ENCODE measurements at regions of chr1 and their contacts with region 1.

Region 1: DNA sequence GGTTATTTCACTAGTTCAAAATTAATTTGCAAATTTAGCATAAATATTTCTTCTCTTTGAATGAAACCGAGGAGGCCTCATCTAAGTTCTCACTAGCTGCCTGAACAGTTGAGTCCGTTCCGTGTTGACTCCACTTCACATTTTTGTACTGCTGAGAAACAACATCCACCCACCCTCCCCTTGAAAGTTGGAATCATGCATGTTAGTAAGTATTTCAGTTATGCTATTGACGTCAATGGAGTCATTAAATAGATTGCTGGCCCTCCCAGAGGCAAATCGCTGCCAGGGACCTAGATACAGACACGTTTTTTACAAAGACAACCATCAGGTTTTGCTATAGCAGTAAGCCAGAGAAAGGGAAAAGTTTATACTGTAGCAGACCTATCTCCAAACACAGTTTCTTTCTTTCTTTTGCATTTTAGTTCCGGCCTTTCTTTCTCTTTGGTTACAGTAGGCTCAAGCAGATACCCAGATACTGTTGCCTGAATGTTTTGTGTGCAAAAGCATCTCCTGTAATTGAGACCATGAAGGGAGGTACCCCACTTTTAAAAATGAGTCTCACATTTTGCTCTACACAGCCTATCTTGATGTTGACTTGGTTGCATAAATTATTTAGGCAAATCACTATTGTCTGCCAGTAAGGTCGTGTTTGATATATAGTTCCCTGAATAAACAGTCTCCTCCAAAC is 262.6 kb upstream of the SGIP1 start:
- DNase-seq: peak; percentile 96
- H3K4me3 ChIP-seq: no peak overlapping the region
- H3K27ac ChIP-seq: peak overlapping the region; percentile 44
- H3K4me1 ChIP-seq: peaks cover 18% of the 10 kb centered on the region
- H3K27me3 ChIP-seq: no peaks in the 10 kb centered on the region
- CTCF ChIP-seq: no peak

Region 2: DNA sequence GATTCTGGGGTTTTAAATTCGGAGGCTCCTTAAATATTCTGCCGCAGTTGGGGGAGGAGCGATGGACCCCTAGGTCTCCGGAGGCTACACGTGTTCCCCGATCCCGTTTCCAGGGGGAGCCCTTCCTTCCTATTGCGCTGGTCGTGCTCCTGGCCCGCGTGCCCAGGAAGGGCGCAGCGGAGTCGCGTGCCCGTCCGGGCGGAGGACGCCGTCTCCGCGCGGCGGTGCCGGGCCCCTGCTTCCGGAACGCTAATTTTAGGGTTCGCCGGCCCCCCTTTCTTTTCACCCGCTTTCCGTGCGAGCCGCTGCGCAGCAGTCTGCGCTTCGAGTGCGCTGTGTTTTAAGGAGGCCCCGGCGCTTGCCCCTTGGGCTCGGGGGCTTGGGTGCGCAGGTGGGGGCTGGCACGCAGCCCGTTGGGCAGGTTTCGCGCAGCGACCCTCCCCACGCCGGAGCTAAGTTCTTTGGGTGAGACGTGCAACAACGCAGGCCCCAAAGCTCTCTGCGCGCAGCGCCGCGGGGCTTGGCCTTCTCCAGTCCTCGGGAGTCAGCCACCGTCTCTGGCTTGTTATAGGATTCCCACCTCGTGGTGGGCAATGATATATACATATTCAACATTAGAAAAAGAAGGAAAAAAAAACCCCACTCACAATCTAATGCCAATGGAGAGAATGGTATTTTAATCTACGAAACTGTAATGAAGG is 1005.6 kb before region 1 on chr1:
- CTCF ChIA-PET with region 1: no interaction called
- dilution Hi-C with region 1: no loop called
- in situ Hi-C with region 1: no loop called
- intact Hi-C with region 1: loop called (anchors 10 kb)
- DNase-seq: peak; percentile 46
- H3K4me3 ChIP-seq: peak overlapping the region; percentile 43 to 47 (median 46)
- H3K27ac ChIP-seq: no peak overlapping the region
- H3K4me1 ChIP-seq: peaks cover 15% of the 10 kb centered on the region
- H3K27me3 ChIP-seq: no peaks in the 10 kb centered on the region
- CTCF ChIP-seq: peak; percentile 8 to 55

Region 3: GRCh38 chr1:66288048-66288447 is 16.7 kb after region 1 on chr1:
- CTCF ChIA-PET with region 1: no interaction called
- dilution Hi-C with region 1: no loop called
- in situ Hi-C with region 1: no loop called
- intact Hi-C with region 1: loop called (anchors 2 kb)
- DNase-seq: no peak
- H3K4me3 ChIP-seq: no peak overlapping the region
- H3K27ac ChIP-seq: no peak overlapping the region
- H3K4me1 ChIP-seq: peaks cover 5% of the 10 kb centered on the region
- H3K27me3 ChIP-seq: no peaks in the 10 kb centered on the region
- CTCF ChIP-seq: no peak

Region 4: GRCh38 chr1:66331657-66332547 is 60.5 kb after region 1 on chr1:
- CTCF ChIA-PET with region 1: no interaction called
- dilution Hi-C with region 1: no loop called
- in situ Hi-C with region 1: no loop called
- intact Hi-C with region 1: loop called (anchors 1 kb)
- DNase-seq: peak; percentile 75
- H3K4me3 ChIP-seq: peak overlapping the region; percentile 7 to 27 (median 19)
- H3K27ac ChIP-seq: no peak overlapping the region
- H3K4me1 ChIP-seq: peaks cover 14% of the 10 kb centered on the region
- H3K27me3 ChIP-seq: peaks cover 2% of the 10 kb centered on the region
- CTCF ChIP-seq: peak in 1 of 2 donors; percentile 21

Region 5: DNA sequence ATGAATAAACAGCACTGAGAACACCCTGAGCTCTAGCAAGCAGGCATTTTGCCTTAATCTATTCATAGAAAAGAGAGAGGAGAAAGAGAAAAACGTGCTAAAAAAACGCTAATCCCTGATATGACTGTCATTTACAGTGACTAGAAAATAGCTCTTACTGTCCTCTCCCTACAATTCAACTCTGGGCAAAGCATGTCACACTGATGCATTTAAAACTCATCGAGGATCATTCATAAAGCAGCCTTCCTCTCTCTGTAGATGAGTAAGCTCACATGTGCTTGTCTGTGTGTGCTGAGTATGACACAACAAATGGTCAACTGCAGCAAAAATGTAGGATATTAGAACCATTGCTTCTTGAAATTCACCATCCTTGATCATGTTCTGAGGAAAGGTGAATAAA is 371.6 kb after region 1 on chr1:
- CTCF ChIA-PET with region 1: no interaction called
- dilution Hi-C with region 1: no loop called
- in situ Hi-C with region 1: no loop called
- intact Hi-C with region 1: no loop called
- DNase-seq: peak; percentile 9
- H3K4me3 ChIP-seq: no peak overlapping the region
- H3K27ac ChIP-seq: no peak overlapping the region
- H3K4me1 ChIP-seq: peaks cover 10% of the 10 kb centered on the region
- H3K27me3 ChIP-seq: no peaks in the 10 kb centered on the region
- CTCF ChIP-seq: no peak

Measured in mammary epithelial cell (primary cell).